Common myeloid progenitor, CD34-positive (primary cell): ENCODE measurements at regions of chr4 and their contacts with region 1.

Region 1: GRCh38 chr4:147840838-147841738 is 109.2 kb downstream of the ARHGAP10 start:
- DNase-seq: peak in 2 of 3 donors; percentile 20
- H3K4me3 ChIP-seq: no peak overlapping the region
- H3K27ac ChIP-seq: no peak overlapping the region
- H3K4me1 ChIP-seq: peaks cover 0 to 11% (median 0%) of the 10 kb centered on the region in 4 experiments
- H3K27me3 ChIP-seq: no peaks in the 10 kb centered on the region

Region 2: GRCh38 chr4:147731580-147732517 is 109.2 kb before region 1 on chr4 and contains the start of gene ARHGAP10:
- CTCF ChIA-PET with region 1: no interaction called
- POLR2A ChIA-PET with region 1: no interaction called
- DNase-seq: peak; percentile 69 to 89 (median 84)
- H3K4me3 ChIP-seq: peak within 1 kb of the TSS; percentile 80 to 92 (median 87)
- H3K27ac ChIP-seq: no peak within 1 kb of the TSS
- H3K4me1 ChIP-seq: peaks cover 9 to 28% (median 19%) of the 10 kb centered on the region in 4 experiments
- H3K27me3 ChIP-seq: peaks cover 0 to 20% (median 5%) of the 10 kb centered on the region in 5 experiments

Region 3: GRCh38 chr4:147825451-147826287 is 15.4 kb before region 1 on chr4:
- CTCF ChIA-PET with region 1: interaction called, 11 read pairs
- POLR2A ChIA-PET with region 1: interaction called, 3 read pairs
- DNase-seq: peak in 2 of 3 donors; percentile 49 to 54
- H3K4me3 ChIP-seq: peak overlapping the region in 3 of 7 experiments; percentile 21 to 70 (median 24)
- H3K27ac ChIP-seq: no peak overlapping the region
- H3K4me1 ChIP-seq: peaks cover 0 to 50% (median 3%) of the 10 kb centered on the region in 4 experiments
- H3K27me3 ChIP-seq: no peaks in the 10 kb centered on the region